ENCODE measurements at regions of chr11 and their contacts with region 1.

Region 1: GRCh38 chr11:76860539-76861475 is at the start of gene ACER3:
- DNase-seq: peak; percentile 36 to 95 (median 61)
- ATAC-seq: peak; percentile 98
- H3K4me3 ChIP-seq: peak within 1 kb of the TSS; percentile 57
- H3K4me3 Mint-ChIP-seq: peak within 1 kb of the TSS; percentile 80 to 92 (median 88)
- H3K27ac ChIP-seq: peak within 1 kb of the TSS; percentile 72
- H3K27ac Mint-ChIP-seq: peak within 1 kb of the TSS; percentile 73 to 95 (median 85)
- H3K4me1 ChIP-seq: peaks cover 9 to 11% of the 10 kb centered on the region in 2 donors
- H3K4me1 Mint-ChIP-seq: peaks cover 19 to 36% (median 28%) of the 10 kb centered on the region in 7 donors
- H3K27me3 ChIP-seq: no peaks in the 10 kb centered on the region
- H3K27me3 Mint-ChIP-seq: no peaks in the 10 kb centered on the region
- total RNA-seq, gene ACER3: 4.7 to 15.2 (median 9.0) TPM

Region 2: DNA sequence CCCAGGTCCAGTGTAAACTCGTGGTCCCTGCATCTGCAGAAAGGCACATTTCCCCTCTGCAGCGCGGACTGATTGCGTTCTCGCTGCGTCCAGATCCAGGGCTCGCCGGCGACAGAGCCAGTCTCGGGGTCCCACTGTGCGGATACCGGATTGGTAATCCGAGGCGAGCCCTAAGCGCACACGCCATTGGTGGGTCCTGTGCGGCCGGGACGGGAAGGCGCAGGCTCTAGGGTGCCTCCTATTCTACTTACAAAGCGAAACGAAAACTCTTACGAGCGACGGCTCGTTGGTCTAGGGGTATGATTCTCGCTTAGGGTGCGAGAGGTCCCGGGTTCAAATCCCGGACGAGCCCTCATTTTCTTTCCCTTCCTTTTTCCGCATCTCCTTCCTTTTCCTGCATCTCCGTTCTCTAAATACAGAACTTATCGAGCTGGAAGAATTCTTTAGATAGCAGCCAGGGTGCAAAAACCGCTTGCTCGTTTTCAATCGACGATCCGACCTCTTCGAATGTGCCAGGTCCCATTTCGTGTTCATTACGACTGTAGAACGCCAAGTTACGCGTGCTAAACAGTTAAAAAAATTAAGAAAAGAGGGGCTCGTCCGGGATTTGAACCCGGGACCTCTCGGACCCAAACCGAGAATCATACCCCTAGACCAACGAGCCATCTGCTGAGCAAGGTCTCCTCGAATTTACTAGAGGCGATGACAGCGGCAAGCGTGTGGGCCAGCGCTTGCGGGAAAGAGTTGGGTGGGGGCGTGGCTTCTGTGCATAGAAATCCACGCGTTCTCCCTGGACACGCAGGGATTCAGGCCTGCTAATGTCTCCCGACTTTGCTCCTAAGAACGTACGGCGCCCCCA is 625.3 kb before region 1 on chr11:
- CTCF ChIA-PET with region 1: no interaction called
- POLR2A ChIA-PET with region 1: no interaction called
- intact Hi-C with region 1: loop called in 1 of 2 experiments (anchors 10 kb)
- DNase-seq: peak; percentile 79 to 95 (median 92)
- ATAC-seq: peak; percentile 87
- H3K4me3 ChIP-seq: peak overlapping the region; percentile 98
- H3K4me3 Mint-ChIP-seq: peak overlapping the region; percentile 82 to 94 (median 91)
- H3K27ac ChIP-seq: peak overlapping the region; percentile 57
- H3K27ac Mint-ChIP-seq: peak overlapping the region; percentile 89 to 99 (median 96)
- H3K4me1 ChIP-seq: peaks cover 26 to 40% of the 10 kb centered on the region in 2 donors
- H3K4me1 Mint-ChIP-seq: peaks cover 16 to 65% (median 55%) of the 10 kb centered on the region in 7 donors
- H3K27me3 ChIP-seq: no peaks in the 10 kb centered on the region
- H3K27me3 Mint-ChIP-seq: peaks cover 0 to 30% (median 0%) of the 10 kb centered on the region in 5 donors

Region 3: GRCh38 chr11:76807206-76807875 is 53.5 kb before region 1 on chr11:
- CTCF ChIA-PET with region 1: no interaction called
- POLR2A ChIA-PET with region 1: no interaction called
- intact Hi-C with region 1: loop called (anchors 2 kb)
- DNase-seq: peak; percentile 25 to 69 (median 49)
- ATAC-seq: peak; percentile 76
- H3K4me3 ChIP-seq: no peak overlapping the region
- H3K4me3 Mint-ChIP-seq: peak overlapping the region in 5 of 10 donors; percentile 9 to 48 (median 25)
- H3K27ac ChIP-seq: no peak overlapping the region
- H3K27ac Mint-ChIP-seq: peak overlapping the region in 1 of 9 donors; percentile 69
- H3K4me1 ChIP-seq: peaks cover 0 to 10% of the 10 kb centered on the region in 2 donors
- H3K4me1 Mint-ChIP-seq: peaks cover 5 to 52% (median 29%) of the 10 kb centered on the region in 7 donors
- H3K27me3 ChIP-seq: no peaks in the 10 kb centered on the region
- H3K27me3 Mint-ChIP-seq: peaks cover 6 to 35% (median 15%) of the 10 kb centered on the region in 5 donors

Region 4: DNA sequence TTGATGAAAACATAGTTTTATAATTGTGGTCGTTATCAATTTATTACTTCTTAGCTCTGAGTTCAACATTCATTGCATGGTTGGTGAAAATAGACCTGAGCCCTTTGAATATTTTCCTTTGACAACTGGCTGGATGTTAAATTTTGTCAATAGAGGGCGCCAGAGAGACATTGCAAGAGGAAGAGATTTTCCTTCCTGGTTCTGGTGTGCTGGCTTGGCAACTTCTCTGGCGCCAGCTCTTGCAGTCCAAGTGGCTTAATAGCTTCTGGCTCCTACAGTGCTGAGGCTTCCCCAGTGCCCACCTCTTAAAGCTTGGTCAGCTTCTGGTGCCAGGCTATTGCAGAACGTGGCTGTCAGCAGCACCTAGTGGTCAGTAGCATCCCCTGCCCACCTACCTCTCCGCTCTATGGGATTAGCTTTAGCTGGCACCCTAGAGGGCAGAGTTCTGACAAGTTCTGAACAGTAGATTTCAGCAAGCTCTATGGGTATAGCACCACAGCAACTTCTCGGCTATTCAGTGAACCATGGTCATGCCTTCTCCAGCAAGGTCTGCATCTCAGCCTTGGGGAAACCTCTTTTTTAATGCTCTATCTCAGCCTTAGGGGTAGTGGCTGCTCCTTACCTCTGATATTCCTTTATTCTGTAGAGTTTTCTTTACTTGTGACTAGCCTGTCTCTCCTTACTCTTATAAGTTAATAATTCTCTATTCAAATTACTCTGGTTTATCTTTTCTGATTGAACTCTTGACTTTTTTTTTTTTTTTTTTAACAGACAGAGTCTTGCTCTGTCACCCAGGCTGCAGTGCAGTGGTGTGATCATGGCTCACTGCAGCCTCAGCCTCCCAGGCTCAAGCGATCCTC is 59.3 kb after region 1 on chr11:
- CTCF ChIA-PET with region 1: interaction called, 4 read pairs
- POLR2A ChIA-PET with region 1: interaction called, 4 read pairs
- intact Hi-C with region 1: loop called (anchors 2 to 5 kb)
- DNase-seq: peak; percentile 16 to 78 (median 74)
- ATAC-seq: peak; percentile 84
- H3K4me3 ChIP-seq: peak overlapping the region; percentile 51
- H3K4me3 Mint-ChIP-seq: peak overlapping the region; percentile 18 to 86 (median 77)
- H3K27ac ChIP-seq: no peak overlapping the region
- H3K27ac Mint-ChIP-seq: peak overlapping the region in 1 of 9 donors; percentile 52
- H3K4me1 ChIP-seq: peaks cover 0 to 4% of the 10 kb centered on the region in 2 donors
- H3K4me1 Mint-ChIP-seq: peaks cover 0 to 12% (median 11%) of the 10 kb centered on the region in 7 donors
- H3K27me3 ChIP-seq: no peaks in the 10 kb centered on the region
- H3K27me3 Mint-ChIP-seq: peaks cover 0 to 5% (median 0%) of the 10 kb centered on the region in 5 donors